ENCODE measurements at regions of chr4 and their contacts with region 1.

Region 1: DNA sequence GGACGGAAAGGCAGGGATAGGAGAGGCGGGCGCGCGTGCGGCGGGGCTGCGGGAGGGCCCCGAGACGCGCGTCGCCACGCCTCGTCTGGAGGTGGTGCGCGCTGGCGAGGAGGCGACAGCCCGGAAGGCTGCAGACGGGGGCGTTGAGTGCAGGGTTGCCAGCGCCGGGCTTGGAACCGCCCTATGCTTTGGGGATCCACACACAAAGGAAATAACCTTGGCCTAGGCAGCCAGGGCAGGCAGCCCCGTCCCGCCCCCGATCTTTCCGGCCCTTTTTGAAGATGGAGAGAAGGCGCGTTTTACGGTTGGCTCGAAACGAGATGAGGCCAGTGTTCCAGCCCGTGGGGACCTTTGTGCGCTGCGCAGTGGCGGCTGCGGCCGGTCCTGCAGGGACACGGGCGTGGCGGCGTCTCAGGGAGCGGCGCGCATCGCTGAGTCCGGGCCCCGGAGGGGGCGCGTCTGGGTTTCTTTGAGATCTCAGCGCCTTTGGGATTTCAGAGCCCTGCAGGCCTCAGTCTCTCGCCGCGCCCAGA is 50.8 kb upstream of the TRIM2 start:
- DNase-seq: peak; percentile 88
- H3K4me3 ChIP-seq: peak overlapping the region; percentile 58
- H3K27ac ChIP-seq: peak overlapping the region; percentile 69
- H3K4me1 ChIP-seq: peaks cover 37% of the 10 kb centered on the region
- H3K27me3 ChIP-seq: no peaks in the 10 kb centered on the region
- CTCF ChIP-seq: no peak

Region 2: GRCh38 chr4:153204247-153205027 is 51.0 kb after region 1 on chr4 and contains the start of gene TRIM2:
- CTCF ChIA-PET with region 1: no interaction called
- POLR2A ChIA-PET with region 1: no interaction called
- intact Hi-C with region 1: loop called (anchors 5 kb)
- DNase-seq: peak; percentile 95
- H3K4me3 ChIP-seq: peak within 1 kb of the TSS; percentile 45
- H3K27ac ChIP-seq: peak within 1 kb of the TSS; percentile 54
- H3K4me1 ChIP-seq: peaks cover 17% of the 10 kb centered on the region
- H3K27me3 ChIP-seq: no peaks in the 10 kb centered on the region
- CTCF ChIP-seq: no peak
- total RNA-seq, gene TRIM2: 93.2 and 107 TPM in 2 replicates

Region 3: DNA sequence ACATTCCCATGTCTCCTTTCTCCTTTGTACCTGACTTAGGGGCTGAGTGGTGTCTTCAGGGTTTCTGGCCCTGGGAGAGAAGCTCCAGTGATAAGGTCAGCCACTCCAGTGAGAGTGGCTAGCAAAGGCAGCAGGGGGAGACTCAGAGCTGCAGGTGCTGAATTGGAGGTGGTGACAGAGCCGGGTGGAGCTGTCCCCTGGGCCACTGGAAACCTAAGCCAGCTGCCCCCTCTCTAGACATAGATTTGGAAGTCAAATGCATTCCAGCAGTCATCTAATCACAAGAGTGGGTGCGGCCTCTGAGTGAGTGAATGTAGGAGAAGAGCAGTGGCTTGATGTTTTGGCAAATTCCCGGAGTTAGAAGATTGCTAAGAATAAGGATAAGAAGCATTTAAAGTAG is 79.4 kb after region 1 on chr4:
- CTCF ChIA-PET with region 1: no interaction called
- POLR2A ChIA-PET with region 1: no interaction called
- intact Hi-C with region 1: loop called (anchors 5 kb)
- DNase-seq: peak; percentile 68
- H3K4me3 ChIP-seq: no peak overlapping the region
- H3K27ac ChIP-seq: peak overlapping the region; percentile 79
- H3K4me1 ChIP-seq: peaks cover 86% of the 10 kb centered on the region
- H3K27me3 ChIP-seq: no peaks in the 10 kb centered on the region
- CTCF ChIP-seq: peak; percentile 39; the same call in 1 of the 2 replicates